ENCODE measurements at regions of chr3 and their contacts with region 1.

Region 1: GRCh38 chr3:119388577-119388976 is 74.8 kb downstream of the TMEM39A start:
- DNase-seq: peak; percentile 45
- H3K4me3 ChIP-seq: no peak overlapping the region
- H3K27ac ChIP-seq: no peak overlapping the region
- H3K4me1 ChIP-seq: no peaks in the 10 kb centered on the region
- H3K27me3 ChIP-seq: no peaks in the 10 kb centered on the region
- CTCF ChIP-seq: peak; percentile 53

Region 2: DNA sequence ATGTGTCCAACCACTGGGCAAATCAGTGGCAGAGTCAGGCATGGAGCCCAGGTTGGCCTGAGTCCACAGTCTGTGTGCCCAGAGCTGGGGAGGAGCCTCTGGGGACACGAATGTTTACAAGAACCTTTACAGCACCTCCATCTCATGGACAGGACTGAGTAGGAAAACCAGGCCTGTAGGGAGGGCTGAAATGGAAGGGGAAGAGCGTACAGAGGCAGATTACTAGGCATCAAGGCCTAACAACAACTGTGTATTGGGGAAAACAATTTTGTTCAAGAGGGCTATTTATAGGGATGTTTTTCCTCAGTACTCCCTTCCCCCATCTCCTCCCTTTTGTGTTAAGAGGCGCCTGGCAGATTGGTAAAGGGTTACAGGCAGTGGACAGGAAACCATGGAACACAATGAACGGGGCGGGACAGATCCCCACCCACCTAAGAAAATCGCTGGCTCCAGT is 109.4 kb before region 1 on chr3:
- CTCF ChIA-PET with region 1: no interaction called
- POLR2A ChIA-PET with region 1: no interaction called
- intact Hi-C with region 1: loop called (anchors 5 kb)
- DNase-seq: no peak
- H3K4me3 ChIP-seq: no peak overlapping the region
- H3K27ac ChIP-seq: no peak overlapping the region
- H3K4me1 ChIP-seq: no peaks in the 10 kb centered on the region
- H3K27me3 ChIP-seq: no peaks in the 10 kb centered on the region
- CTCF ChIP-seq: no peak